H1 (cell line): ENCODE measurements at regions of chr12 and their contacts with region 1.

Region 1: GRCh38 chr12:21650833-21651396 is 6.7 kb downstream of the LDHB start:
- DNase-seq: no peak
- H3K4me3 ChIP-seq: no peak overlapping the region
- H3K27ac ChIP-seq: no peak overlapping the region
- H3K4me1 ChIP-seq: peaks cover 0 to 11% (median 5%) of the 10 kb centered on the region in 4 experiments; a peak in 5 of 7 replicates
- H3K27me3 ChIP-seq: no peaks in the 10 kb centered on the region
- CTCF ChIP-seq: no peak
- EP300 ChIP-seq: no peak
- POLR2A ChIP-seq: peak in 1 of 2 experiments; percentile 60; a peak in 2 of 3 replicates
- RAD21 ChIP-seq: no peak

Region 2: GRCh38 chr12:21559855-21560569 is 90.9 kb before region 1 on chr12:
- CTCF ChIA-PET with region 1: no interaction called
- POLR2A ChIA-PET with region 1: no interaction called
- DNase-seq: no peak
- H3K4me3 ChIP-seq: no peak overlapping the region
- H3K27ac ChIP-seq: no peak overlapping the region
- H3K4me1 ChIP-seq: no peaks in the 10 kb centered on the region
- H3K27me3 ChIP-seq: no peaks in the 10 kb centered on the region
- CTCF ChIP-seq: no peak
- EP300 ChIP-seq: no peak
- POLR2A ChIP-seq: no peak
- RAD21 ChIP-seq: no peak

Region 3: DNA sequence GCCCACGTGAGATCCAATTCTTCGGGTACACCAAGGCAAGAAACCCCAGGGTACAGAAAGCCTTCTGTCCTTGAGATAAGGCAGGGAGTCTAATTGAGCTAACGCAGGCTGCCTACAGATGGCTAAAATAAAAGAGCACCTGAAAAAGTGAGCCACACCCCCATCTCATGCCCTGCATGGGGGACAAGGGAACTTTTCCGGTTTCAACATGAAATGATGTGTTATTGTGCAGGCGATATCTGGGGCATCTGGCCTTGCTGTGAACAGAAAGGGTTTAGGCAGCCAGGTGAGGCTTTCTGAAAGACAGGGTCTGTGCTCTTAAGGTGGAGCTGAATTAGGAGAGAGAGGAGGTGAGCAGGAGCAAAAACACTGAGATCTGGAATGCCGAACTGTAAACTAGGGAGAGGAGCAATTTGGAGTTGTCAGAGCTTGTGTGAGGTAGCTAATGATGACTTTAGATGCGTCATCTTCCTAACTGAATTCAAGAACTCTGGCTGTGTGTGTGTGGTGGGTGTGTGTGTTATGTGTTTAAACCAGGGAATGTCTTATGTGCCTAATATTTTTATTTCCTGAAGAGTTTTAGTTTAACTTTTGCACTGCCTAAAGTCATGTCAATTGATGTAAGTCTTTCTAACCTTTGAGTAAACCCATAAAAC is 26.8 kb after region 1 on chr12:
- CTCF ChIA-PET with region 1: interaction called, 11 read pairs
- POLR2A ChIA-PET with region 1: interaction called, 13 read pairs
- DNase-seq: no peak
- H3K4me3 ChIP-seq: no peak overlapping the region
- H3K27ac ChIP-seq: no peak overlapping the region
- H3K4me1 ChIP-seq: no peaks in the 10 kb centered on the region
- H3K27me3 ChIP-seq: no peaks in the 10 kb centered on the region
- CTCF ChIP-seq: no peak
- EP300 ChIP-seq: no peak
- POLR2A ChIP-seq: no peak
- RAD21 ChIP-seq: no peak

Region 4: DNA sequence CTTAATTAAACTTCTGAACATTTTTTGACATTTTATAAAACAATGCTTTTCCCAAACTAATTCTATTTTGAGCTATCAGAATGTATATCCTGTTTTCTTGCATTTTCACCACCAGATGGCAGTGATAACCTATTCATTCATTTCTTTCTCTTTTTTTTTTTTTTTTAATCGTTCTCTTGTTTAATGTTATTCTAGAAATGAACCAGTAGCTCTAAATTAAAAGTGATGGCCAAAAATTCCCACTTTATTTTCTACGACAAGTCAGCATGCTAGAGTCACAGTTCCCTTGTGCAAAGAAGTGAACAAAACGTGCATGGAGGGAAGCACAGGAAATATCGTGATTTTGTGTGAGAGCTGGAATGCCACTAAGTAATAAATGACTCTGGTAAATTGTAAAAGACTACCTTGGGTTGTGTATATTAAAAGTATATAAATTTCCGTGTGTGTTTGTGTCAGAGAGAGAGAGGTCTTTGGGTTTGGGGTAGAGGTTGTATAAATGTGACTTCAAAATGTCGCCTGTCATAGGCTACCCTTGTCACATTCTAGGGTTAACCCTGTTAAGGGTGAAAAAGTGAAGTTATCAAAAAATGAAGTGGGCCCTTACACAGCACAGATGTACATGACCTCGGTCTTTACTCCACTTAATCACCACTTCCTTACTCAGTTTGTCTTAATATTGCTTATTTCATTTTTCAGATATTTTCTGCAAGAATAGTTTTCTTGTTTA is 47.2 kb after region 1 on chr12:
- CTCF ChIA-PET with region 1: no interaction called
- POLR2A ChIA-PET with region 1: no interaction called
- DNase-seq: no peak
- H3K4me3 ChIP-seq: no peak overlapping the region
- H3K27ac ChIP-seq: no peak overlapping the region
- H3K4me1 ChIP-seq: peaks cover 0 to 4% (median 0%) of the 10 kb centered on the region in 4 experiments; a peak in 1 of 7 replicates
- H3K27me3 ChIP-seq: no peaks in the 10 kb centered on the region
- CTCF ChIP-seq: peak in 2 of 3 experiments; percentile 27 to 34; a peak in 2 of 4 replicates
- EP300 ChIP-seq: no peak
- POLR2A ChIP-seq: no peak
- RAD21 ChIP-seq: peak in 1 of 2 experiments; percentile 70; a peak in 3 of 4 replicates

Region 5: DNA sequence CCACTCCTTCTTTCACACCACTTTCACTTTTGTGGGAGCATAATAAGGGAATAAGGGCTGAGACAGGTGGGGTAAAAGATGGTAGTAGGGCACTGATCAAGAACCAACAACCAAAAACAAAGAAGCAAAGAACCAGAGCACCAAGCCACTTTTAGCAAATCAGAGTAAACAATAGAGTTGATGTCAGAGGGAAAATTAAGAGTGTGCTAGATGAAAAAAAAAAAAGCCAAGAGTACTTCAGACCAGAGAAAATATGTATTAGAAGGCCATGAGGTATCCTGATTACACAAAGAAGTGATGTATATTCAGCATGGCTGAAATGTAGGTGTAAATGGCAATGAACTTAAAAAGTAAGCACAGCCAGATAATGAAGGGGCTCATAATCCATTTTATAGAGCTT is 214.9 kb after region 1 on chr12:
- CTCF ChIA-PET with region 1: no interaction called
- POLR2A ChIA-PET with region 1: no interaction called
- DNase-seq: no peak
- H3K4me3 ChIP-seq: no peak overlapping the region
- H3K27ac ChIP-seq: no peak overlapping the region
- H3K4me1 ChIP-seq: no peaks in the 10 kb centered on the region
- H3K27me3 ChIP-seq: no peaks in the 10 kb centered on the region
- CTCF ChIP-seq: no peak
- EP300 ChIP-seq: no peak
- POLR2A ChIP-seq: no peak
- RAD21 ChIP-seq: no peak